CD4-positive, alpha-beta T cell (primary cell): ENCODE measurements at regions of chr3 and their contacts with region 1.

Region 1: GRCh38 chr3:71369701-71370391 is 213.7 kb downstream of the FOXP1 start:
- DNase-seq: no peak
- ATAC-seq: no peak
- H3K4me3 ChIP-seq: no peak overlapping the region
- H3K4me3 Mint-ChIP-seq: no peak overlapping the region
- H3K27ac ChIP-seq: no peak overlapping the region
- H3K27ac Mint-ChIP-seq: peak overlapping the region; percentile 87
- H3K4me1 ChIP-seq: peaks cover 41% of the 10 kb centered on the region
- H3K4me1 Mint-ChIP-seq: peaks cover 82% of the 10 kb centered on the region
- H3K27me3 ChIP-seq: no peaks in the 10 kb centered on the region
- H3K27me3 Mint-ChIP-seq: no peaks in the 10 kb centered on the region
- CTCF ChIP-seq: no peak

Region 2: DNA sequence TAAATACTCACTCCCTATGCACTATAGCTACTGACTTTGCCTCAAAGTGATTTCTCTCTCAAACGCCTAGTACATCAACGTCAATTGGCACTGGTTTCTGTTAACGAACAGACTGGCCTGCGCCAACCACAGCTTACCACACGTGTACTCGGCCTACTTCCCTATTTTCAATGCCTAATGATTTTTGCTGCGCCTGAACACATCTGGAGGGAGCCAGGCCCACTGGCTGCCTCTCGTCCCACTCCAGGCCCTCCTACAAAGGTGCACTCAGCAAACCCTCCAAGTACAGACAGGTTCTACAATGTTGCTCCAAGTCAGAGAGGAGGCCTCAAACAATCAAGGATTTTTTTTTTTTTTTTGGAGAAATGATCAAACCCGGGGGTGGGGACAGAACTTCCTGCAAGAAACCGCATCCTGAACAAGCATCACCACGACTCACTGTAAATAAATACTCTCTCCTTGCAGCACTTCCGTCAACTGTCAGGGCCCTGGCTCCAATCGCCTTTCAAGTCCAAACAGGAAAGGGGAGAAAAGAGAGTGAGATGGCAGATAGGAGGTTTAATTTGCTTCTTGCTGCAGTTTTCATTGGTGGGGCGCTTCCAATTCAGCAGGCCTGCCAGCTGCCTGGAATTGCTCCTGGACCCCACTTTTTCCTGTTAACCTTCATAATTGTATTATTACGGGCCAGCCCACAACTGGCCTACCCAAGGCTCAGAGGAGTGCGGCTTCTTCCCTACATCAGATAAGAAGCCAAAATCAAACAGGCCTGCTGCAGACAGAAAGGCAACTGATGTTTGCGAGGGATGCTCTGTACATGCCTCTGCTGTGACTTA is 74.4 kb after region 1 on chr3:
- CTCF ChIA-PET with region 1: no interaction called
- POLR2A ChIA-PET with region 1: interaction called, 5 read pairs
- intact Hi-C with region 1: loop called in 1 of 2 experiments (anchors 1 kb)
- DNase-seq: peak; percentile 53 to 95 (median 68)
- ATAC-seq: peak; percentile 78
- H3K4me3 ChIP-seq: no peak overlapping the region
- H3K4me3 Mint-ChIP-seq: peak overlapping the region; percentile 79
- H3K27ac ChIP-seq: peak overlapping the region; percentile 67 to 82
- H3K27ac Mint-ChIP-seq: peak overlapping the region; percentile 94
- H3K4me1 ChIP-seq: peaks cover 97% of the 10 kb centered on the region
- H3K4me1 Mint-ChIP-seq: peaks cover 97% of the 10 kb centered on the region
- H3K27me3 ChIP-seq: no peaks in the 10 kb centered on the region
- H3K27me3 Mint-ChIP-seq: no peaks in the 10 kb centered on the region
- CTCF ChIP-seq: no peak

Region 3: DNA sequence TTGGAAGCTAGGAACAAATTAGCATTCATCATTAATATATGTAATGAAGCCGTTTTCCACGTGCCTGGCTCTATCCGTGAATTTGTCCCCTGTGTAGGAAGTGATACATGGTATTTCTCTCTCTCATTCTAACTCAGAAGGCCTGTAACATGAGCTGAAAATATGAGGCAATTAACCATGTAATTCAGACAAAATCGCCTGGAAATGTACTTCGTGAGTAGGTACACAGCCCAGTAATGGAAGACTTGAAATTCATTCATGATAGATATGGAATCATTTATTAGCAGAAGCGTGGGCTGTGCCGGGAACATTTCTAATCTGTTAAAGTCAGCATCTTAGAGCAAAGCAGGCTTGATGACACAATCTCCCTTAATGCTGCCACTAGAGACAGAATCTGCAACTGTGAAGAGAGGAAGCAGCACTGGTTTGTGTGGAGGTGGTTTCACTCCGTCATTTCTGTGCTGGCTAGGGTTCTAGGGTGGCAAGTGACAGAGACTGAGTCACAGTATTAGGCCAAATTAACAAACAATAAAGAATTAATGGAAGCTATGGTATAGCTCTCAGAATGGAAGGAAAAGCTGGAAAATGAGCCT is 640.1 kb after region 1 on chr3:
- CTCF ChIA-PET with region 1: no interaction called
- POLR2A ChIA-PET with region 1: no interaction called
- intact Hi-C with region 1: no loop called
- DNase-seq: peak in 2 of 14 experiments; percentile 49 to 57
- ATAC-seq: no peak
- H3K4me3 ChIP-seq: no peak overlapping the region
- H3K4me3 Mint-ChIP-seq: no peak overlapping the region
- H3K27ac ChIP-seq: no peak overlapping the region
- H3K27ac Mint-ChIP-seq: no peak overlapping the region
- H3K4me1 ChIP-seq: no peaks in the 10 kb centered on the region
- H3K4me1 Mint-ChIP-seq: no peaks in the 10 kb centered on the region
- H3K27me3 ChIP-seq: no peaks in the 10 kb centered on the region
- H3K27me3 Mint-ChIP-seq: no peaks in the 10 kb centered on the region
- CTCF ChIP-seq: no peak